GM12878 (cell line): ENCODE measurements at regions of chr5 and their contacts with region 1.

Region 1: DNA sequence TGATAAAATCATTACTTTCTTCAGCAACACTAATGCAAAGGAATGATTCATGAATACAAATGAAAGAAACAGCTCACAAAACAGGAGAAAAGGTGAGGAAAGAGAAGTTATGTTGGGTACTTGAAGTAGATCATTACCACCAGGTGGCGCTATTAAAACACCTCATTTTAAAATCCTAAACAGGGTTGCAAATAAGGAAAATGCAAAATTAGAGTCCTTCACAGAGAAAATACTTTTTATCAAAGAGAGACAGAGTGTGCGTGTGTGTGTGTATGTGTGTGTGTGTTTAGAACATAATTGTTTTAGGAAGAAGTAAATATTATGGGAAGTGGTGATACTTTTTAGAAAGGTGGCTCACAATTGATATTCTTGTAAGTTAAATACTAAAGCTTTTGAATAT is 49.5 kb upstream of the CD180 start:
- DNase-seq: peak; percentile 19
- ATAC-seq: peak; percentile 73
- H3K4me3 ChIP-seq: no peak overlapping the region
- H3K27ac ChIP-seq: no peak overlapping the region
- H3K4me1 ChIP-seq: no peaks in the 10 kb centered on the region
- H3K27me3 ChIP-seq: no peaks in the 10 kb centered on the region
- CTCF ChIP-seq: peak; percentile 52 to 65 (median 60); a peak in 5 of 6 replicates
- EP300 ChIP-seq: no peak
- POLR2A ChIP-seq: no peak
- RAD21 ChIP-seq: peak; percentile 83

Region 2: DNA sequence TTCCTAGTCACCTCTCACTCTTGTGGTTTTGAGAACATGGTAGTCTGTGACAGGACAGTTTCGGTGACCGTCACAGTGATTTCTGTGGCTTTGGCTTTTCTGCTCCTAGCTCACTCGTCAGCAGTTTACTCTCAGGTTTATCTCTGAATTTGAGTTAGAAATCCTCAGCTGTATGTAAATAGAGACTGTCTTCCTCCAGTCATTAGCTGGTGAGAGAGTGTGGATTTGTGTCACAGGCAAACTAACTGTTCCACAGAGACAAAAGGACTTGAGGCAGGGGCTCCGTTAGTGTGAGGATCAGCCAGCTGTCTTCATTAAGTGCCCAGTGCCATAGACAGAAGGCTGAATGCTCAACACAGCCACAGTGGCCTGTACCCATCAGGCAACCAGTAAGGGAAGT is 180.9 kb before region 1 on chr5:
- CTCF ChIA-PET with region 1: no interaction called
- POLR2A ChIA-PET with region 1: no interaction called
- RAD21 ChIA-PET with region 1: no interaction called
- SMC1A ChIA-PET with region 1: no interaction called
- in situ Hi-C with region 1: no loop called
- intact Hi-C with region 1: no loop called
- DNase-seq: peak; percentile 8
- ATAC-seq: peak; percentile 87
- H3K4me3 ChIP-seq: no peak overlapping the region
- H3K27ac ChIP-seq: no peak overlapping the region
- H3K4me1 ChIP-seq: peaks cover 4% of the 10 kb centered on the region; the same call in 1 of the 2 replicates
- H3K27me3 ChIP-seq: no peaks in the 10 kb centered on the region
- CTCF ChIP-seq: no peak
- EP300 ChIP-seq: no peak
- POLR2A ChIP-seq: no peak
- RAD21 ChIP-seq: no peak

Region 3: DNA sequence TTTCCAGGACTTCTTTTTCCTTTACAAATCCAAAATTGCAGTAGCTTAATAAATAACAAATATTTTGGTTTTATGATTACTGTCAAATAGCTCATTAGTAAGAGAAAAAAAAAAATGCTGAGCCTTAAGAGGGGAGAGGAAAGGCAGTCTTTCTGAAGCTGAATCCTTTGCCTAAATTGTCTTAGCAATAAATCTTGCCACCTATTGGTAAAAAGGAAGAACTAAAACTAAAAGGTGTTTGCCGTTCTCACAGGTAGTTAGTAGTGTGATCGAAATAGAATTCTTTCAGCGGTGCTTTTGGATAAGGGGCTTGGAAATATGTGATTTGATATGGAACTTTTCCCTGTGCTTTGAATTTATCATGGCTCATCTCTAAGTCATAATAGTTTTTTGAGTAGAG is 1000.7 kb after region 1 on chr5:
- CTCF ChIA-PET with region 1: interaction called, 73 read pairs
- POLR2A ChIA-PET with region 1: no interaction called
- RAD21 ChIA-PET with region 1: interaction called, 3 read pairs
- SMC1A ChIA-PET with region 1: interaction called, 39 read pairs
- in situ Hi-C with region 1: loop called (anchors 5 kb)
- intact Hi-C with region 1: loop called (anchors 1 kb)
- DNase-seq: no peak
- ATAC-seq: peak; percentile 47; the same call in 2 of the 3 replicates
- H3K4me3 ChIP-seq: no peak overlapping the region
- H3K27ac ChIP-seq: no peak overlapping the region
- H3K4me1 ChIP-seq: no peaks in the 10 kb centered on the region
- H3K27me3 ChIP-seq: no peaks in the 10 kb centered on the region
- CTCF ChIP-seq: peak; percentile 19 to 38 (median 32); a peak in 4 of 6 replicates
- EP300 ChIP-seq: no peak
- POLR2A ChIP-seq: no peak
- RAD21 ChIP-seq: peak; percentile 54

Region 4: GRCh38 chr5:68994645-68995044 is 1748.5 kb after region 1 on chr5:
- CTCF ChIA-PET with region 1: no interaction called
- POLR2A ChIA-PET with region 1: no interaction called
- RAD21 ChIA-PET with region 1: no interaction called
- SMC1A ChIA-PET with region 1: no interaction called
- in situ Hi-C with region 1: loop called (anchors 25 kb)
- intact Hi-C with region 1: no loop called
- DNase-seq: peak; percentile 23
- ATAC-seq: peak; percentile 89
- H3K4me3 ChIP-seq: no peak overlapping the region
- H3K27ac ChIP-seq: no peak overlapping the region
- H3K4me1 ChIP-seq: peaks cover 10% of the 10 kb centered on the region
- H3K27me3 ChIP-seq: no peaks in the 10 kb centered on the region
- CTCF ChIP-seq: no peak
- EP300 ChIP-seq: no peak
- POLR2A ChIP-seq: no peak
- RAD21 ChIP-seq: no peak